ENCODE measurements at regions of chr14 and their contacts with region 1.

Region 1: DNA sequence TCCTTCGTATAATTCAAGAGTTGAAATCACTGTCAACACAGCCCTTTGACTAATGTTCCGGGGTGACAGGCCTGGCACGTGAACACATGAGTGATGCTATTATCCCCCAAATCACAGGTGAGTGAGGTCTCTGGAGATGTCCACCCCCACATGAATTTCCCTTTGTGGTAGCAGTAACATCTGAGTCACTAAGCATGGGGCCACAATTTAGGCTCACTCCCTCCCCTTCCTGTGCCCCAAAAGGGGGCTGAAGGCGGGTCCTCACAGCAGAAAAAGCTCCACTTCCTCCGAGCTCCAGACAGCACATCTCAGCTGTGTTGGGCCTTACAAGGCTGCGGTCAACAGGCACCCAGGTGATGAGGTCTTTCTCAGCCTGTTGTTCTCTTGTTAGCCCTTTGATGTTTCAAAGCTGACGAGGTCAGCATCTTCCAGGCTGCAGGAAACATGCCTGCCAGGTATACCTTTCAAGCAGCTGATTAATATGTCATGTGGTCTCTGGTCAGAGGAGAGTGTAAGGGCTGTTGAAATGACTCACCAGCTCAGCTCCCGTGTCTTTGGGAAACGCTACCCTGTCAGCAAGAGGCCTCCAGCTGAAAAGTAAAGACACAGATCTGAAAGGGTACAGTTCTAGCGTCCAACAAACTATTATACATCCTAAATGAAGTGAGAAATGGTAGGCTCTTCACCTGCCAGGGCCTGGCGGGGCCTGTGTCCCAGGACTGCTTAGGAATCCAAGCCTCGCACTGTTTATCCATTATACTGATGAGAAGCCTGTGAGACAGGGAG is 107.3 kb downstream of the ZFP36L1 start:
- DNase-seq: peak in 1 of 5 donors; percentile 18
- H3K4me3 ChIP-seq: no peak overlapping the region
- H3K27ac ChIP-seq: no peak overlapping the region
- H3K4me1 ChIP-seq: peaks cover 35% of the 10 kb centered on the region
- H3K27me3 ChIP-seq: no peaks in the 10 kb centered on the region
- CTCF ChIP-seq: no peak
- EP300 ChIP-seq: no peak
- POLR2A ChIP-seq: no peak

Region 2: DNA sequence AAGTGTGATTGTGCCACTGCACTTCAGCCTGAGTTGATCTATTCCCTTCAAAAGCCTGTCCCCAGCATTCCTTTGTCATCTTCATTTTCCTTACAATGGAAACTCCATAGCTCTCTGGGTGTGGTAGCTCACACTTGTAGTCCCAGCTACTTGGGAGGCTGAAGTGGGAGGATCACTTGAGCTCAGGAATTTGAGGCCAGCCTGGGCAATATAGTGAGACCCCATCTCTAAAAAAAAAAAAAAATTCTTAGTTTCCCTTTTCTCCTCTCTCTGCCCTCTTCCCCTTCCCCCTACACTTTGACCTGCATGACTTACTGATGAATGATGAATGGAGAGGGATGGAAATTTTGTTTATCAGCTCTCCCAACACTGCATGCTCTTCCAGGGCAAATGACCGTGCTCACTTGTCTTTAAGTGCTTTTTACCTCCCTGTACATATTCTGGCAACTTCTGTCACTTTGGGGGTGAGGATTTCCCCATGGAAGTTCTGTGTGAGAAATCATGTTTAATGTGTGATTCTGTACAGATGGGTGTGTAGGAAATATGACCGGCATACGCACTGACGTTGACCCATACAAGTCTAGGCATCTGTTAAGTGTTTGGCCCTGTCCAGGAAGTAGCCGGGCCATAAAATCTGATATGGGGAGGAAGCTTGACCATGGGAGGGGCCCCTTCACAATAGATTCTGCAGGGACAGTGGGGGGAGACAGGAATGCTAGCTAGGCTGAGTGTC is 41.9 kb after region 1 on chr14:
- intact Hi-C with region 1: no loop called
- DNase-seq: no peak
- H3K4me3 ChIP-seq: no peak overlapping the region
- H3K27ac ChIP-seq: no peak overlapping the region
- H3K4me1 ChIP-seq: peaks cover 1% of the 10 kb centered on the region
- H3K27me3 ChIP-seq: no peaks in the 10 kb centered on the region
- CTCF ChIP-seq: no peak
- EP300 ChIP-seq: no peak
- POLR2A ChIP-seq: no peak

Region 3: GRCh38 chr14:68739701-68740100 is 54.1 kb after region 1 on chr14:
- intact Hi-C with region 1: loop called in 1 of 4 experiments (anchors 2 kb)
- DNase-seq: no peak
- H3K4me3 ChIP-seq: no peak overlapping the region
- H3K27ac ChIP-seq: no peak overlapping the region
- H3K4me1 ChIP-seq: peaks cover 22% of the 10 kb centered on the region
- H3K27me3 ChIP-seq: no peaks in the 10 kb centered on the region
- CTCF ChIP-seq: no peak
- EP300 ChIP-seq: no peak
- POLR2A ChIP-seq: no peak

Region 4: DNA sequence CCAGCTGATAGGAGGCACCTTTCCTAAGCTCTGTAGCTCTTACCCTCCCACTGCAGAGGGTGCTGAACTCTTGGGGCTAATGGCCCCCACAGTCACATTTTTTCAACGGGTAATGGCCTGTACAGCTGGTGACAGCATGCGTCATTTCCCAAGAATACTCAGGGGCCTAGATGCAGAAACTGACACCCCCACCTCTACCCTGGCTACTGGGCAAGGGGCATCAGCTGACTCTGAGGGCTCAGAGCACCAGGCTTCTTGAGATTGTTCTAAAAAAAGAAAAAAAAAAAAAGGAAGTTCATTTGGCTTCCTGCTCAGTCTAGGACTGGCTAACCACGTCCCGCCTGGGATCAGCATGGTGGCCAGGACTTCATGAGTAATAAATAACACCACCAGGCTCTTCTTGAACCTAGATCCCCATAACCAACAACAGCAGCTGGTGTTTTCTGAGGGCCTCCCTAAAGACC is 72.0 kb after region 1 on chr14:
- intact Hi-C with region 1: loop called in 2 of 4 experiments (anchors 5 to 10 kb)
- DNase-seq: peak in 1 of 5 donors; percentile 21
- H3K4me3 ChIP-seq: no peak overlapping the region
- H3K27ac ChIP-seq: no peak overlapping the region
- H3K4me1 ChIP-seq: peaks cover 35% of the 10 kb centered on the region
- H3K27me3 ChIP-seq: no peaks in the 10 kb centered on the region
- CTCF ChIP-seq: no peak
- EP300 ChIP-seq: no peak
- POLR2A ChIP-seq: no peak

Region 5: GRCh38 chr14:68762953-68763764 is 77.5 kb after region 1 on chr14:
- intact Hi-C with region 1: loop called in 2 of 4 experiments (anchors 5 to 10 kb)
- DNase-seq: peak; percentile 94 to 96 (median 95)
- H3K4me3 ChIP-seq: no peak overlapping the region
- H3K27ac ChIP-seq: peak overlapping the region in 1 of 2 donors; percentile 72
- H3K4me1 ChIP-seq: peaks cover 43% of the 10 kb centered on the region
- H3K27me3 ChIP-seq: no peaks in the 10 kb centered on the region
- CTCF ChIP-seq: peak in 2 of 3 donors; percentile 39 to 44
- EP300 ChIP-seq: peak; percentile 7
- POLR2A ChIP-seq: no peak